SK-N-SH (cell line): ENCODE measurements at regions of chr12 and their contacts with region 1.

Region 1: GRCh38 chr12:117857632-117858612 is 110.9 kb downstream of the KSR2 start:
- DNase-seq: peak; percentile 71
- H3K4me3 ChIP-seq: no peak overlapping the region; a peak in 1 of 4 replicates
- H3K27ac ChIP-seq: no peak overlapping the region
- H3K4me1 ChIP-seq: no peaks in the 10 kb centered on the region
- H3K27me3 ChIP-seq: no peaks in the 10 kb centered on the region
- CTCF ChIP-seq: peak; percentile 59
- EP300 ChIP-seq: no peak
- RAD21 ChIP-seq: no peak; the same call in 1 of the 2 replicates

Region 2: GRCh38 chr12:117202556-117202955 is 655.4 kb before region 1 on chr12:
- CTCF ChIA-PET with region 1: interaction called, 10 read pairs
- POLR2A ChIA-PET with region 1: no interaction called
- DNase-seq: no peak
- H3K4me3 ChIP-seq: no peak overlapping the region
- H3K27ac ChIP-seq: no peak overlapping the region
- H3K4me1 ChIP-seq: no peaks in the 10 kb centered on the region
- H3K27me3 ChIP-seq: no peaks in the 10 kb centered on the region; the same call in 1 of the 2 replicates
- CTCF ChIP-seq: no peak
- EP300 ChIP-seq: no peak
- RAD21 ChIP-seq: no peak

Region 3: GRCh38 chr12:117228239-117228638 is 629.7 kb before region 1 on chr12:
- CTCF ChIA-PET with region 1: interaction called, 320 read pairs
- POLR2A ChIA-PET with region 1: no interaction called
- DNase-seq: no peak
- H3K4me3 ChIP-seq: no peak overlapping the region
- H3K27ac ChIP-seq: no peak overlapping the region
- H3K4me1 ChIP-seq: no peaks in the 10 kb centered on the region
- H3K27me3 ChIP-seq: no peaks in the 10 kb centered on the region
- CTCF ChIP-seq: no peak
- EP300 ChIP-seq: no peak
- RAD21 ChIP-seq: no peak

Region 4: GRCh38 chr12:117869551-117869950 is 11.6 kb after region 1 on chr12:
- CTCF ChIA-PET with region 1: interaction called, 24 read pairs
- POLR2A ChIA-PET with region 1: no interaction called
- DNase-seq: no peak
- H3K4me3 ChIP-seq: no peak overlapping the region
- H3K27ac ChIP-seq: no peak overlapping the region
- H3K4me1 ChIP-seq: no peaks in the 10 kb centered on the region
- H3K27me3 ChIP-seq: no peaks in the 10 kb centered on the region
- CTCF ChIP-seq: no peak
- EP300 ChIP-seq: no peak
- RAD21 ChIP-seq: no peak

Region 5: DNA sequence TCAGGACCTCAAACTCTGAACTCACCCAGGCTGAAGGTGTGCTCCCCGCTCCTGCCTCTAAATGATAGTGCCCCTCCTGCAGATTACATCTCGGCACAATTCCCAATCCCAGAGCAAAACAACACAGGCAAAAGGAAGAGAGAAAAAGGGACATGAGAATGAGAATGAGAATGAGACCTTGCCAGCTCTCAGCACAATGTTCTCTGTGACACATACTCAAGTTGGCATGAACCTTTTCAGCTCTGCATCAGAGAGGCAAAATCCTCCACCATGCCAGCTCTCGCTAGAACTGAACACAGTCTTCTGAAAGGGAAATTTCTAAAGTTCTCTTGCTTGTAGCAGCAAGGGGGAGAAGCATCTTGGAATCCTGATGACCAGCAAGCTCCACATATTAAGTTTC is 26.2 kb after region 1 on chr12:
- CTCF ChIA-PET with region 1: interaction called, 10 read pairs
- POLR2A ChIA-PET with region 1: no interaction called
- DNase-seq: no peak
- H3K4me3 ChIP-seq: no peak overlapping the region
- H3K27ac ChIP-seq: no peak overlapping the region
- H3K4me1 ChIP-seq: no peaks in the 10 kb centered on the region
- H3K27me3 ChIP-seq: no peaks in the 10 kb centered on the region
- CTCF ChIP-seq: no peak
- EP300 ChIP-seq: no peak
- RAD21 ChIP-seq: no peak

Region 6: DNA sequence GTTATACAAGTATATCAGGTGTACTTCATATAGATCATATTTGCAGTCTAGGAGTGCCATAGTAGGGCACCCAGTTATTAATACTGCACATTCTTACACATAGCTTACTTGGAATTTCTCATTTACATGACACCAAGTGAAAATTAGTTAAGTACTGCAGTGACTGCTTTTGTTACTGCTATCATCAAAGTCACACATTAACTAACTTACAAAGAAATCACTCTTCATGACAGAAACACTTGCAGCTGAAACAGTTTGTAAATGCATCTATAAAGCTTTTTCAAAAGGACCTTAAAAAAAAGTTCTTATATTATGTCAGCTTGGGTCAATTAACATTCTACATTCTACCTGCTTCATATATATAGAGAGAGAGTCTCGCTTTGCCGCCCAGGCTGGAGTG is 140.8 kb after region 1 on chr12:
- CTCF ChIA-PET with region 1: no interaction called
- POLR2A ChIA-PET with region 1: no interaction called
- DNase-seq: no peak
- H3K4me3 ChIP-seq: no peak overlapping the region
- H3K27ac ChIP-seq: no peak overlapping the region
- H3K4me1 ChIP-seq: no peaks in the 10 kb centered on the region
- H3K27me3 ChIP-seq: no peaks in the 10 kb centered on the region
- CTCF ChIP-seq: no peak
- EP300 ChIP-seq: no peak
- RAD21 ChIP-seq: no peak